ENCODE measurements at regions of chr19 and their contacts with region 1.

Region 1: DNA sequence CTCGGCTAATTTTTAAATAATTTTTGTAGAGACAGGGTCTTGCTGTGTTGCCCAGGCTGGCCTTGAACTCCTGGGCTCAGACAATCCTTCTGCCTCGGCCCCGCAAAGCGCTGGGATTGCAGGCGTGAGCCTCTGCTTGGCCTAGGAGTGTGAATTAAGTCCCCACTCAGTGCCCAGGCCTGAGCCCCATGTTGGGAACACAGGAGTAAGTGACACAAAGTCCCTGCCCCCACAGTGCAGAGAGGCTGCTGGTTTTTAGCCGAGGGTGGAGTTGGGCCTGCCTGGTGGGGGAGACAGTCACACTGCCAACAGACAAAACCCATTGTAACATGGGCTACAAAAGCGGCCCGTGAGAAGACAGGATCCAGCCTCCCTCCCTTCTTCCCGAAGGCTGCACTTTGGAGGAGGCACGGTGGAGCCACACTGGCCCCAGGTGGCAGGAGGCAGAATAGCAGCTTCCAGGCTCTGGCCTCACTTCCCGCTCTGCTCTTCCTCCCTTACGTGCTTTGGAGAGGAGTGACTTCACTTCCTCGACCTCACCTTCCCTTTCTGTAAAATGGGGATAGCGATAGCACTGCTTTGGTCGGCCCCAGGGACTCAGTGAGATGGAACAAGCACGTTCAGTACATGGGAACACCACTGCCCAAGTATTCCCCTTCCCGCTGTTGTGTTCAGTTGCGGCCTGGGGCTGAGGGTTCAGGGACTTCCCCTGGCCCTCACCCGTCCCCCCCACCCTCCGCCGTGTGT is 15.2 kb upstream of the EHD2 start:
- DNase-seq: peak; percentile 80
- ATAC-seq: peak; percentile 88
- H3K4me3 Mint-ChIP-seq: no peak overlapping the region
- H3K27ac Mint-ChIP-seq: peak overlapping the region; percentile 37
- H3K4me1 Mint-ChIP-seq: no peaks in the 10 kb centered on the region
- H3K27me3 Mint-ChIP-seq: no peaks in the 10 kb centered on the region

Region 2: GRCh38 chr19:47436712-47437401 is 261.2 kb before region 1 on chr19:
- CTCF ChIA-PET with region 1: interaction called, 10 read pairs
- POLR2A ChIA-PET with region 1: no interaction called
- intact Hi-C with region 1: loop called (anchors 1 kb)
- DNase-seq: peak; percentile 92
- ATAC-seq: peak; percentile 91
- H3K4me3 Mint-ChIP-seq: no peak overlapping the region
- H3K27ac Mint-ChIP-seq: no peak overlapping the region
- H3K4me1 Mint-ChIP-seq: peaks cover 17% of the 10 kb centered on the region
- H3K27me3 Mint-ChIP-seq: peaks cover 38% of the 10 kb centered on the region

Region 3: DNA sequence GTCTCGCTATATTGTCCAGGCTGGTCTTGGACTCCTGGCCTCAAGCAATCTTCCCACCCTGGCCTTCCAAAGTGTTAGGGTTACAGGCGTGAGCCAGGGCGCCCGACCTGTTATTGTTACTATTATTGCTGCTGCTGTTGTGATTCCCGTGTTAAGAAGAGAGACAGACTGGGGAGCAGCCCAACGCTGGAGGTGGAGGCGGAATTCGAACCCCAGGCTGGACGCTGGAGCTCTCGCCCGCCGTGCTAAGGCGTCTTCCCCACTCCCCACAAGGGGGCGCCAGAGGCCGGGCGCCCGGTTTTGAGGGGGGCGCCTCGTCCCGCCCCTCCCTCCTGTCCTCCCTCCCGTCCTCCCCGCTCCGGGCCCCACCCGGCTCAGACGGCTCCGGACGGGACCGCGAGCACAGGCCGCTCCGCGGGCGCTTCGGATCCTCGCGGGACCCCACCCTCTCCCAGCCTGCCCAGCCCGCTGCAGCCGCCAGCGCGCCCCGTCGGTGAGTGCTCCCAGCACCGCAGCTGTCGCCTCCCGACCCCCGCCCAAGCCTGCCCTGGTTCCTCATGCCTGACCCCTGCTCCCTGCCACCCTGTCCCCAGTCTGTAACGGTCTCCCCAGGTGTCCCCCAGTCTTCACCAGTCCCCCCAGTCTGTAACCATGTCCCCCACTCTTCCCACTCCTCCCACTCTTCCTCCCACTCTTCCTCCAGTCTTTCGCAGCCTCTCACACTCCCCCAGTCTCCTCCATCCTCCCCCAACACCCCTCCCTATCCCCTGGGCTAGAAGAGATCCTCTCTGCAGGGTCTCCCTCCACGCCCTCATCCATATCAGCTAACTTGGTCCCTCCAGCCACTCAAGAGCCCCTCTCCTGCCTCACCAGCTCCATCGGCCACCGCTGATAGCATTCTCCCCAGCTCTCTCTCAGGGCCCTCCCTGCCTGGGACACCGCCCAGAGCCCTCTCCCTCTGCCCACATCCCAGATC is 15.3 kb after region 1 on chr19 and contains the start of gene EHD2:
- CTCF ChIA-PET with region 1: interaction called, 18 read pairs
- POLR2A ChIA-PET with region 1: no interaction called
- intact Hi-C with region 1: no loop called
- DNase-seq: peak; percentile 76
- ATAC-seq: peak; percentile 78
- H3K4me3 Mint-ChIP-seq: peak within 1 kb of the TSS; percentile 53
- H3K27ac Mint-ChIP-seq: no peak within 1 kb of the TSS
- H3K4me1 Mint-ChIP-seq: peaks cover 5% of the 10 kb centered on the region
- H3K27me3 Mint-ChIP-seq: peaks cover 37% of the 10 kb centered on the region
- total RNA-seq, gene EHD2: 1.6 to 2.5 TPM

Measured in activated CD4-positive, alpha-beta T cell treated with anti-CD3 and anti-CD28 coated beads for 36 hours (primary cell).